Naive thymus-derived CD4-positive, alpha-beta T cell (primary cell): ENCODE measurements at regions of chr1 and their contacts with region 1.

Region 1: DNA sequence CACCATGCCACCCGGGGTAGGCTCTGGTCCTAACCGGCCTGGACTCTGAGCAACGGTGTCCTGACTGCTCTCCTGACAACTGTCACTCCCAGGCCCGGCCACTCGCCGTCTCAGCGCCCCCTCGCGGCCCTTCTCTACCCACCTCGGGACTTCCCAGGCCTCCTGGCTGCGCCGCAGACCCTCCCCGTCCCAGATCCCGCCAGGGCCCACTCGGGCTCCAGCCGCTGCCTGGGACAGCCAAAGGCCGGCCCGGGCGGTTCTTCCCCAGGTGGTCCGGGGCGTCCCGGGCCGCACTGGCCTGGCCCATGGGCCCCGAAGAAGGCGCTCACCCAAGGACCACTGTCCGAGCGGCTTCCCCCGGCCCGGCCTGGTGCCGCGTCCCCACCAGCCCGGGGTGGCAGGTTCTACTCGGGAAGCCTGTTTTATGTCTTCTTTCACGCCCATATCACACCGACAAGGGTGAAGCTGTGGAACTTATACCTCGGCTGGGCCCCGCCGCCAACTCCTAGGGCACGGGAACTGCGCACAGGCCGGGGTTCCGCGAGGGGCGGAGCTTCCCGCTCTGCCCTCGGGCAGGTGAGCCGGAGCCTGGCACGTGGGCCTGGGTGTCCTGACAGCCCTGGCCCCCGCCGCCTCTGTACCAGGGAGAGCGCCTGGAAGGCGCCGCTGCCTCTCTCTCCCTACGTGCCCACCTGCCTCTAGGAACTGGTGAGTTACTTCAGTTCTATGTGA is 138.3 kb downstream of the TTLL7 start:
- DNase-seq: peak; percentile 61 to 80 (median 75)
- ATAC-seq: peak; percentile 93
- H3K4me3 ChIP-seq: peak overlapping the region; percentile 68
- H3K4me3 Mint-ChIP-seq: peak overlapping the region; percentile 70 to 91 (median 88)
- H3K27ac ChIP-seq: peak overlapping the region; percentile 89
- H3K27ac Mint-ChIP-seq: peak overlapping the region; percentile 67 to 96 (median 93)
- H3K4me1 ChIP-seq: peaks cover 0 to 4% of the 10 kb centered on the region in 2 donors
- H3K4me1 Mint-ChIP-seq: peaks cover 8 to 32% (median 20%) of the 10 kb centered on the region in 7 donors
- H3K27me3 ChIP-seq: no peaks in the 10 kb centered on the region
- H3K27me3 Mint-ChIP-seq: no peaks in the 10 kb centered on the region

Region 2: GRCh38 chr1:82775402-82776000 is 1085.2 kb before region 1 on chr1:
- CTCF ChIA-PET with region 1: no interaction called
- POLR2A ChIA-PET with region 1: no interaction called
- intact Hi-C with region 1: loop called in 1 of 2 experiments (anchors 5 kb)
- DNase-seq: peak in 1 of 9 donors; percentile 2
- ATAC-seq: no peak
- H3K4me3 ChIP-seq: no peak overlapping the region
- H3K4me3 Mint-ChIP-seq: no peak overlapping the region
- H3K27ac ChIP-seq: no peak overlapping the region
- H3K27ac Mint-ChIP-seq: no peak overlapping the region
- H3K4me1 ChIP-seq: no peaks in the 10 kb centered on the region
- H3K4me1 Mint-ChIP-seq: peaks cover 0 to 4% (median 0%) of the 10 kb centered on the region in 7 donors
- H3K27me3 ChIP-seq: no peaks in the 10 kb centered on the region
- H3K27me3 Mint-ChIP-seq: peaks cover 0 to 8% (median 0%) of the 10 kb centered on the region in 5 donors

Region 3: GRCh38 chr1:83508485-83509151 is 352.0 kb before region 1 on chr1:
- CTCF ChIA-PET with region 1: interaction called, 3 read pairs
- POLR2A ChIA-PET with region 1: no interaction called
- intact Hi-C with region 1: loop called in 1 of 2 experiments (anchors 5 kb)
- DNase-seq: peak in 8 of 9 donors; percentile 27 to 89 (median 84)
- ATAC-seq: peak; percentile 96
- H3K4me3 ChIP-seq: peak overlapping the region; percentile 7
- H3K4me3 Mint-ChIP-seq: peak overlapping the region; percentile 56 to 96 (median 74)
- H3K27ac ChIP-seq: peak overlapping the region; percentile 76
- H3K27ac Mint-ChIP-seq: peak overlapping the region; percentile 89 to 99 (median 95)
- H3K4me1 ChIP-seq: peaks cover 6 to 36% of the 10 kb centered on the region in 2 donors
- H3K4me1 Mint-ChIP-seq: peaks cover 17 to 78% (median 64%) of the 10 kb centered on the region in 7 donors
- H3K27me3 ChIP-seq: no peaks in the 10 kb centered on the region
- H3K27me3 Mint-ChIP-seq: no peaks in the 10 kb centered on the region

Region 4: GRCh38 chr1:83583351-83584014 is 277.2 kb before region 1 on chr1:
- CTCF ChIA-PET with region 1: no interaction called
- POLR2A ChIA-PET with region 1: no interaction called
- intact Hi-C with region 1: loop called in 1 of 2 experiments (anchors 5 kb)
- DNase-seq: peak in 5 of 9 donors; percentile 25 to 45 (median 27)
- ATAC-seq: peak; percentile 55
- H3K4me3 ChIP-seq: no peak overlapping the region
- H3K4me3 Mint-ChIP-seq: peak overlapping the region in 1 of 10 donors; percentile 19
- H3K27ac ChIP-seq: no peak overlapping the region
- H3K27ac Mint-ChIP-seq: peak overlapping the region in 2 of 9 donors; percentile 37 to 52
- H3K4me1 ChIP-seq: peaks cover 0 to 8% of the 10 kb centered on the region in 2 donors
- H3K4me1 Mint-ChIP-seq: peaks cover 4 to 29% (median 17%) of the 10 kb centered on the region in 7 donors
- H3K27me3 ChIP-seq: no peaks in the 10 kb centered on the region
- H3K27me3 Mint-ChIP-seq: no peaks in the 10 kb centered on the region

Region 5: DNA sequence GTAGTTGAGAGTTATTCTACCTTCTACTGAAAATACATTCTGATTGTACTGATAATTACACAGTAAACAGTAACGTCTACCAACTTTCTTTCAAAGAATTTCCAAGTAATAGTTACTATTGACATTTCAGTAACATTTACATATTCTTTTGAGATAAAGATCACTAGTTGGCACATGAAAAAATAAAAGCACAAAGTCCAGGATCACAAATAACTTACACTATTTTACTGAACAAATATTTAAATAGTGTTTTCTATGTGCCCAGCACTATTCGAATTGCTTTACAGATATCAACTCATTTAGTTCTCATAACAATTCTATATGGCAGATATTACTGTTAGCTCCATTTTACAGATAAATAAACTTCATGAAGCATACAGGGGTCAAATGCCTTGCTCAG is 11.9 kb after region 1 on chr1:
- CTCF ChIA-PET with region 1: no interaction called
- POLR2A ChIA-PET with region 1: no interaction called
- intact Hi-C with region 1: no loop called
- DNase-seq: no peak
- ATAC-seq: no peak
- H3K4me3 ChIP-seq: no peak overlapping the region
- H3K4me3 Mint-ChIP-seq: no peak overlapping the region
- H3K27ac ChIP-seq: no peak overlapping the region
- H3K27ac Mint-ChIP-seq: no peak overlapping the region
- H3K4me1 ChIP-seq: no peaks in the 10 kb centered on the region
- H3K4me1 Mint-ChIP-seq: no peaks in the 10 kb centered on the region
- H3K27me3 ChIP-seq: no peaks in the 10 kb centered on the region
- H3K27me3 Mint-ChIP-seq: peaks cover 0 to 3% (median 0%) of the 10 kb centered on the region in 5 donors

Region 6: DNA sequence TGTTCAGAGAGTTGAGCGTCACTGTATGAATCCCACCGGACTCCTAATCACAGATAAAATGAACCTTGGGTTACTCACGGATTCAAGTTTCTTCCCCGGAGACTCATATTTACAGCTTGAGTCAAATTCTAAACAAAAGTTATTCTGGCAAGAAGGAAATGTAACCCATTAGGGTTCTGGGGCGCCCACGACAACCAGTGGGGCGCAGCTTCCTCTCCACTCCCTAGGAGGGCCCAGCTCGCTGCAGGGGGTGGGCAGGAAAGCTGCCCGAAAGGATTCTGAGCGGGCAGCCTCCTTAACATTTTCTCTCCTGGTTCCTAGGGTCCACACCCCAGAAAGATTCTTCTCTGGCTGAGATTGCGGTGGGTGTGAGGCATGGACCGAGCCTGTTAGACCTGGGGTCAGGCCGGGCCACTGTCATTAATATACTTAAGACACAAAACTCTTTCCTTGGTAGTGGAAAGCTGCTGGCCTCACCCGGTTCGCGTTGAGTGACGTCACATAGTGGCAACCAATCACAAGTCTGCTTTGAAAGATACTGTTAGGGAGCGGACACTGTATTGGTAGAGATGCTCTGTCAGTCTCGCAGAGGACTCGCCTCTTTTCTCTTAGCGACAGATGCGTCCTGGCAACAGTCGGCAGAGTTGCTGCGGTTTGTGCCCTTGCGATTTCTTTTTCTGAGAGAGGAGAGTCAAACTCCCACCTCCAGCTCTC is 1201.2 kb after region 1 on chr1:
- CTCF ChIA-PET with region 1: no interaction called
- POLR2A ChIA-PET with region 1: no interaction called
- intact Hi-C with region 1: loop called in 1 of 2 experiments (anchors 10 kb)
- DNase-seq: peak; percentile 49 to 93 (median 86)
- ATAC-seq: peak; percentile 99
- H3K4me3 ChIP-seq: peak overlapping the region; percentile 57
- H3K4me3 Mint-ChIP-seq: peak overlapping the region; percentile 79 to 93 (median 88)
- H3K27ac ChIP-seq: peak overlapping the region; percentile 24
- H3K27ac Mint-ChIP-seq: peak overlapping the region; percentile 57 to 96 (median 92)
- H3K4me1 ChIP-seq: peaks cover 4 to 6% of the 10 kb centered on the region in 2 donors
- H3K4me1 Mint-ChIP-seq: peaks cover 11 to 21% (median 14%) of the 10 kb centered on the region in 7 donors
- H3K27me3 ChIP-seq: no peaks in the 10 kb centered on the region
- H3K27me3 Mint-ChIP-seq: peaks cover 3 to 39% (median 13%) of the 10 kb centered on the region in 5 donors